Activated T-helper 1 cell treated with anti-CD3 and anti-CD28 coated beads, Interleukin-12 subunit alpha, Interleukin-12 subunit beta, Interleukin-2, Interleukin-4 antibody, amounts not matched to agents 30 ng/mL and 10 ng/mL and 1 ng/mL, durations not matched to agents 14 hours and 24 hours and 36 hours (primary cell): ENCODE measurements at regions of chr6 and their contacts with region 1.

Region 1: DNA sequence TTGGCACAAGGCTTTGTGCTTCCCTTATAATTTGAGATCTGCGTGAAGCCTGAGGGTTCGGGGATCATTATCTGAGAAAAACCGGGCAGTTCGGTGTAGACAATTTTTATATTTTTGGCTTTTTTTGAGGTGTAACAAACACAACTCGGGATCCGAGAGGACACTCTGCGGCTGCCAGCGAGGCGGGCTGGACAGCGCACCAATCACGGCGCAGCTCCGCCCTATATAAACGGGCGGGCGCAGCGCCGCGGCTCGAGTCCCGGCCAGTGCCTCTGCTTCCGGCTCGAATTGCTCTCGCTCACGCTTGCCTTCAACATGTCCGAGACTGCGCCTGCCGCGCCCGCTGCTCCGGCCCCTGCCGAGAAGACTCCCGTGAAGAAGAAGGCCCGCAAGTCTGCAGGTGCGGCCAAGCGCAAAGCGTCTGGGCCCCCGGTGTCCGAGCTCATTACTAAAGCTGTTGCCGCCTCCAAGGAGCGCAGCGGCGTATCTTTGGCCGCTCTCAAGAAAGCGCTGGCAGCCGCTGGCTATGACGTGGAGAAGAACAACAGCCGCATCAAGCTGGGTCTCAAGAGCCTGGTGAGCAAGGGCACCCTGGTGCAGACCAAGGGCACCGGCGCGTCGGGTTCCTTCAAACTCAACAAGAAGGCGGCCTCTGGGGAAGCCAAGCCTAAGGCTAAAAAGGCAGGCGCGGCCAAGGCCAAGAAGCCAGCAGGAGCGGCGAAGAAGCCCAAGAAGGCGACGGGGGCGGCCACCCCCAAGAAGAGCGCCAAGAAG is 69.0 kb downstream of the HFE start:
- DNase-seq: peak; percentile 89
- H3K4me3 Mint-ChIP-seq: peak overlapping the region; percentile 91
- H3K27ac Mint-ChIP-seq: peak overlapping the region; percentile 95
- H3K4me1 Mint-ChIP-seq: peaks cover 56% of the 10 kb centered on the region
- H3K27me3 Mint-ChIP-seq: peaks cover 3% of the 10 kb centered on the region

Region 2: GRCh38 chr6:26054857-26055669 is 101.2 kb before region 1 on chr6:
- intact Hi-C with region 1: loop called (anchors 1 kb)
- DNase-seq: peak; percentile 83
- H3K4me3 Mint-ChIP-seq: peak overlapping the region; percentile 91
- H3K27ac Mint-ChIP-seq: peak overlapping the region; percentile 99
- H3K4me1 Mint-ChIP-seq: peaks cover 42% of the 10 kb centered on the region
- H3K27me3 Mint-ChIP-seq: peaks cover 3% of the 10 kb centered on the region

Region 3: DNA sequence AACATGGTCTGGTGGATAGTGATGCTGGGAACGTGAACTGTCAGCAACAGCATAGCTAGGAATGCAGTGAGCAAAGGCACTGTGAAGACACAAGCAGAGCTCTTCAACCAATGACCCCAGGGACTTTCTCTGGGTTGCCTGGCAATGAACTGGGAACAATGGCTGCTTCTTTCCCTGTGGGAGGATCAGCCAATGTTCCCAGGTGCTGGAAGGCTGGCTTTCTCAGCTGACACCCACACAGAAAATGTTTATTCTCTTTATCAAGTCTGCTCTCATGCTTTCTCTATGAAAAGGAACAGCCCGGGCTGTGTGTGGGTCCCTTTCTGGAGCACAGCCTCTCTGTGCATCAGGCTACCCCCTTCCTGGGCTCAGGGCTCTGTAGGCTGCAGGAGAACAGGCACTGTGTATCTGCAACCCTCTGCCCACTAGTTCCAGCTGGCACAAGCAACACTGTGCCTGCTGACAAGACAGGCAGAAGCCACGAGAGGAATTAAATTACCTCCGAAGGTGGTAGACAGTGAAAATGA is 14.8 kb before region 1 on chr6:
- intact Hi-C with region 1: no loop called
- DNase-seq: no peak
- H3K4me3 Mint-ChIP-seq: no peak overlapping the region
- H3K27ac Mint-ChIP-seq: no peak overlapping the region
- H3K4me1 Mint-ChIP-seq: no peaks in the 10 kb centered on the region
- H3K27me3 Mint-ChIP-seq: no peaks in the 10 kb centered on the region

Region 4: DNA sequence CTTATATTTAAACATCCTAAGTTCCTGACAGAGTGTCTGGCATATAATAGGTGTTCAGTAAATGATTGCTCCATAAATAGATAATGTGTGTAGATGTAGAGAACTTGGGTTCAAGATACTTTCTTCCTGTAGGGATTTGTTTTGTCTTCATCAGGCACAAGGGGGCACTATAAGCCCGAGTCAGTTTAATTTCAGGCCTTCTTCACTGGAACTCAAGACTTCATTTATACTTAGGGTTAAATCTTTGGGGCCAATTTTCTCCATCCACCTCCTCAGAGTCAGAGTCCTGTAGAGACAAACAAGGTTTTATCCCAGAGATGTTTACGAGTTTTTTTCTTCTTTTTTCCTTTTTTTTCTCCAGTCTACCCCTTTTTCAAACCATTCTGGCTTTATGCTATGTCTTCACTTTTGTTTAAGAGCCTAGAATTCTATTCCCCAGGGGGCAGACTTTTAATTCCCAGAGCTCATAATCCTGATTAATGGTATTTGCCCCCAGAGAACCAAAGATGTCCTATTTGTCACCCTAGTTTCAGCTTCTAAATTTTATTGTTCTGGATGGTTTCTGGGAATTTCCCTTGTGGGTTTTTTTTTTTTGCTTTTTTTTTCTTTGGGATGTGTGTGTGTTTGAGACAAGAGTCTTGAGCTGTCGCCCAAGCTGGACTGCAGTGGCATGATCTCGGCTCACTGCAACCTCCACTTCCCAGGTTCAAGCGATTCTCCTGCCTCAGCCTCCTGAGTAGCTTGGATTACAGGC is 19.3 kb after region 1 on chr6:
- intact Hi-C with region 1: loop called (anchors 1 kb)
- DNase-seq: peak; percentile 58
- H3K4me3 Mint-ChIP-seq: peak overlapping the region; percentile 19
- H3K27ac Mint-ChIP-seq: peak overlapping the region; percentile 79
- H3K4me1 Mint-ChIP-seq: peaks cover 51% of the 10 kb centered on the region
- H3K27me3 Mint-ChIP-seq: no peaks in the 10 kb centered on the region

Region 5: GRCh38 chr6:26204332-26205165 is 48.3 kb after region 1 on chr6:
- intact Hi-C with region 1: loop called (anchors 2 kb)
- DNase-seq: peak; percentile 82
- H3K4me3 Mint-ChIP-seq: no peak overlapping the region
- H3K27ac Mint-ChIP-seq: no peak overlapping the region
- H3K4me1 Mint-ChIP-seq: peaks cover 33% of the 10 kb centered on the region
- H3K27me3 Mint-ChIP-seq: peaks cover 2% of the 10 kb centered on the region

Region 6: DNA sequence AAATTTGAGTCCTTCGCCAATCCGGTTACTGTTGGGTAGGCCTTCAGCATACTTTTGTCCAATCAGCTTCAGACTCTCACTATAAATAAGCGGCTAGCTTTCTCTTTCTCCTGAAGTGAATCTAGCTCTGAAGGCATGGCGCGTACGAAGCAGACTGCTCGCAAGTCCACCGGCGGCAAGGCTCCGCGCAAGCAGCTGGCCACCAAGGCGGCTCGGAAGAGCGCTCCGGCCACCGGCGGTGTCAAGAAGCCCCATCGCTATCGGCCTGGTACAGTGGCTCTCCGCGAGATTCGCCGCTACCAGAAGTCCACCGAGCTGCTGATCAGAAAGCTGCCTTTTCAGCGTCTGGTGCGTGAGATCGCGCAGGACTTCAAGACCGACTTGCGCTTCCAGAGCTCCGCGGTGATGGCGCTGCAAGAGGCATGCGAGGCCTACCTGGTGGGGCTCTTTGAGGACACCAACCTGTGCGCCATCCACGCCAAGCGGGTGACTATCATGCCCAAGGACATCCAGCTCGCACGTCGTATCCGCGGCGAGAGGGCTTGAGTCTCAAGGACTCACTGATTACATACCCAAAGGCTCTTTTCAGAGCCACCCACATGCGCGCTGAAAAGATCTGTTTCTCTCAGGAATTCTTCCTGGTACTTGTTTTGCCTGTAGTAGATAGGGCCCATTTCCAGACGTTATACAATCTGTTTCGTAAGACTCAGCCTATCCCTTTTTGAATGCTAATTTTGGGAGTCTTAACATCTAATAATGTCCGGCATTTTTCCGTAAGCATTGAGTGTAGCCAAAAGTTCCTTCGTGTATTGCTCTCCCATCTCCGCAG is 1653.9 kb after region 1 on chr6:
- intact Hi-C with region 1: loop called (anchors 2 kb)
- DNase-seq: peak; percentile 83
- H3K4me3 Mint-ChIP-seq: peak overlapping the region; percentile 91
- H3K27ac Mint-ChIP-seq: peak overlapping the region; percentile 96
- H3K4me1 Mint-ChIP-seq: peaks cover 78% of the 10 kb centered on the region
- H3K27me3 Mint-ChIP-seq: no peaks in the 10 kb centered on the region